ENCODE measurements at regions of chr9 and their contacts with region 1.

Region 1: DNA sequence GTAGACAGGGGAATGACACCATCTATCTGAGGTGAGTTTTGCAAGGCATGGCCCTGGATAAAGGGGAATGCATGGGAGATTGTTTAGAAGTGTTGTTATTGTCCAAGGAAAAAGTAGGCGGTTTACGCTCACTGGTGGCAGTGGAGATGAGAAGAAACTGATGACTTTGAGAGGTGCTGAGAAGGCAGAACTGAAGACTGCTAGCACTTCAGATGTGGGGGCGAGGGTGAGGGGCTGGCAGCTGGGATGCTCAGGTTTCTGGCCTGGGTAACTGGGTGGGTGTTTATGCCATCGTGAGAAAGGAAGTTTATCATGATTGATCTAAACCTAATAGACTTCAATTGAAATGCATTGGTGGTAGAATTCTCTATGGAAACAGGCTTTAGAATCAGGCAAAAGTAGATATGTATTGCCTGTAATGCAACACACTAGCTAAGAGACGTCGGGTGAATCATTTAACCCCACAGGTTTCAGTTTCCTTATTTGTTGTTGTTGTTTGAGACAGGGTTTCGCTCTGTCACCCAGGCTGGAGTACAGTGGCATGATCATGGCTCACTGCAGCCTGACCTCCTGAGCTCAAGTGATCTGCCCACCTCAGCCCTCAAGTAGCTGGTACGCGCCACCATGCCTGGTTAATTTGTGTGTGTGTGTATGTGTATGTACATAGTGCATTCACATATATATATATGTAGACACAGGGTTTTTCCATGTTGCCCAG is 123.5 kb downstream of the SLC24A2 start:
- DNase-seq: peak; percentile 69
- H3K4me3 Mint-ChIP-seq: no peak overlapping the region
- H3K27ac Mint-ChIP-seq: peak overlapping the region; percentile 41
- H3K4me1 Mint-ChIP-seq: peaks cover 7% of the 10 kb centered on the region
- H3K27me3 Mint-ChIP-seq: peaks cover 25% of the 10 kb centered on the region

Region 2: GRCh38 chr9:19493174-19493811 is 172.0 kb before region 1 on chr9:
- intact Hi-C with region 1: loop called (anchors 10 kb)
- DNase-seq: peak; percentile 84
- H3K4me3 Mint-ChIP-seq: peak overlapping the region; percentile 9
- H3K27ac Mint-ChIP-seq: no peak overlapping the region
- H3K4me1 Mint-ChIP-seq: peaks cover 10% of the 10 kb centered on the region
- H3K27me3 Mint-ChIP-seq: peaks cover 3% of the 10 kb centered on the region

Measured in activated CD4-positive, alpha-beta T cell treated with anti-CD3 and anti-CD28 coated beads, Interleukin-2, amount 10 ng/mL, durations not matched to agents 24 days and 14 days (primary cell).